Natural killer cell (primary cell): ENCODE measurements at regions of chr11 and their contacts with region 1.

Region 1: GRCh38 chr11:119121008-119121810 is at the start of gene HINFP:
- DNase-seq: peak; percentile 97 to 100
- ATAC-seq: peak; percentile 97 to 100 (median 97)
- H3K4me3 ChIP-seq: peak within 1 kb of the TSS; percentile 99
- H3K4me3 Mint-ChIP-seq: peak within 1 kb of the TSS; percentile 91
- H3K27ac ChIP-seq: peak within 1 kb of the TSS; percentile 73
- H3K27ac Mint-ChIP-seq: peak within 1 kb of the TSS; percentile 87 to 90
- H3K4me1 ChIP-seq: peaks cover 20% of the 10 kb centered on the region
- H3K4me1 Mint-ChIP-seq: peaks cover 32% of the 10 kb centered on the region in 2 donors
- H3K27me3 ChIP-seq: no peaks in the 10 kb centered on the region
- H3K27me3 Mint-ChIP-seq: no peaks in the 10 kb centered on the region
- CTCF ChIP-seq: no peak
- total RNA-seq, gene HINFP: 30.2 to 38.2 (median 31.5) TPM

Region 2: GRCh38 chr11:119067371-119068222 is 53.6 kb before region 1 on chr11 and contains the start of gene VPS11:
- intact Hi-C with region 1: loop called (anchors 5 kb)
- DNase-seq: peak; percentile 95 to 99
- ATAC-seq: peak; percentile 92 to 99 (median 93)
- H3K4me3 ChIP-seq: peak within 1 kb of the TSS; percentile 91
- H3K4me3 Mint-ChIP-seq: peak within 1 kb of the TSS; percentile 95
- H3K27ac ChIP-seq: peak within 1 kb of the TSS; percentile 89
- H3K27ac Mint-ChIP-seq: peak within 1 kb of the TSS; percentile 98 to 99
- H3K4me1 ChIP-seq: peaks cover 19% of the 10 kb centered on the region
- H3K4me1 Mint-ChIP-seq: peaks cover 32 to 33% of the 10 kb centered on the region in 2 donors
- H3K27me3 ChIP-seq: no peaks in the 10 kb centered on the region
- H3K27me3 Mint-ChIP-seq: no peaks in the 10 kb centered on the region
- CTCF ChIP-seq: no peak
- total RNA-seq, gene VPS11: 91.4 to 101 (median 91.7) TPM

Region 3: DNA sequence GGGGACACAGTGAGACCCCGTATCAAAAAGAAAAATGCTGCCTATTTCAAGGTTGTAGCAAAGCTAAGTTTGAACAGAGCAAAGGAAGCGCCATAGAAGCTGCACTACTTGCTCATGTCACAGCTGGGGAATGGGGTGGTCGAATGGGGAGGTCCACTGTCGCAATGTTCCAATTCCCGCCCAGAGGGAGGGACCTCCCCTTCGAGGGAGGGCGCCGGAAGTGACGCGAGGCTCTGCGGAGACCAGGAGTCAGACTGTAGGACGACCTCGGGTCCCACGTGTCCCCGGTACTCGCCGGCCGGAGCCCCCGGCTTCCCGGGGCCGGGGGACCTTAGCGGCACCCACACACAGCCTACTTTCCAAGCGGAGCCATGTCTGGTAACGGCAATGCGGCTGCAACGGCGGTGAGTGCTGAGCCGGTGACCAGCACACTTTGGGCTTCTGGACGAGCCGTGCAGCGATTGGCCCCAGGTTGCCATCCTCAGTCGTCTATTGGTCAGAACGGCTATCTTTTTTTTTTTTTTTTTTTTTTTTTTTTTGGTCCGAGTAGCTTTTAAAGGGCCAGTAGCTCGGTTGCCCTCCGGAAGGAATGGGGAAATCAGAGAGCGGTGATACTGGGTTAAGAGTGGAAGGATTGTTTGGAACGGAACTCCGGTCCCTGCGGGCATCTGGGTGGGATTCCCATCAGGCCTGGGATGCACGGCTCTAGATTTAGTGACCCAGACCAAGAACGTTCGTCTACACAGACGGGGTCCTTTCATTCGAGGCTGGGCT is 36.4 kb before region 1 on chr11 and contains the start of gene HMBS:
- intact Hi-C with region 1: loop called (anchors 5 kb)
- DNase-seq: peak; percentile 93 to 97
- ATAC-seq: peak; percentile 93 to 97 (median 95)
- H3K4me3 ChIP-seq: peak within 1 kb of the TSS; percentile 83
- H3K4me3 Mint-ChIP-seq: peak within 1 kb of the TSS; percentile 92
- H3K27ac ChIP-seq: peak within 1 kb of the TSS; percentile 52
- H3K27ac Mint-ChIP-seq: peak within 1 kb of the TSS; percentile 92 to 94
- H3K4me1 ChIP-seq: peaks cover 24% of the 10 kb centered on the region
- H3K4me1 Mint-ChIP-seq: peaks cover 12 to 16% of the 10 kb centered on the region in 2 donors
- H3K27me3 ChIP-seq: no peaks in the 10 kb centered on the region
- H3K27me3 Mint-ChIP-seq: no peaks in the 10 kb centered on the region
- CTCF ChIP-seq: no peak
- total RNA-seq, gene HMBS: 6.1 to 10.1 (median 6.7) TPM

Region 4: GRCh38 chr11:119095066-119095880 is 25.9 kb before region 1 on chr11:
- intact Hi-C with region 1: loop called (anchors 1 kb)
- DNase-seq: peak; percentile 99
- ATAC-seq: peak; percentile 80 to 92 (median 86)
- H3K4me3 ChIP-seq: peak overlapping the region; percentile 70
- H3K4me3 Mint-ChIP-seq: peak overlapping the region; percentile 91
- H3K27ac ChIP-seq: peak overlapping the region; percentile 84
- H3K27ac Mint-ChIP-seq: peak overlapping the region; percentile 95 to 96
- H3K4me1 ChIP-seq: peaks cover 32% of the 10 kb centered on the region
- H3K4me1 Mint-ChIP-seq: peaks cover 34 to 43% of the 10 kb centered on the region in 2 donors
- H3K27me3 ChIP-seq: no peaks in the 10 kb centered on the region
- H3K27me3 Mint-ChIP-seq: no peaks in the 10 kb centered on the region
- CTCF ChIP-seq: peak; percentile 3

Region 5: DNA sequence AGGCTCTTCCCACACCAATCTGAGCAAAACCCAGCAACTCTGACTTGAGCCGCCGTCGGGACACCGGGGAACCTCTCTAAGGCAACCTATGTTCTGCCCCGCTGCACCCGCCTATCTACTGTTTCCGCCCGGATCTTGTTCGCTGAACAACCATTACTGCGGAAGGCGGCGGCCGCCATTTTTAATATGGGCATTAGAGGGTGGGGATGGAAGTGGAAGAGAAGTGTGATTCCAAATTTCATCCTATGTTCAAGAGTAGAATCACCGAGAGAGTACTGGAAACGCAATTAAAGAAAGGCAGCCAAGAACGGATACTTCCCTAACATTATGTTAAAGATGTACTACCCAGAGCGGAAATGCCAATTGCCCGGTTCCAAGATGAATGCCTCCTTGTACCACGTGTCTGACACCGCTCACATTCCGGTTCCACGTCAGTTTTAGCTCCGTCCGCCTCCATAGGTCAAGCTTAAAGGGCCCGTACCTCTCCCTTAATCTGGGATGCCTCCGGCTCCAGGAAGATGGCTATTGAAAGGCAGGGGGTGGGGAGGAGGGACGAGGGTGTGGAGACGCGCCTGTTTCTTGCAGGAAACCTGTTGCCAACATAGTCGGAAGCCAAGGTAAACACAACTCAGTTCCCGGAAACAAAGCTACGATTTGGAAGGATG is 19.3 kb before region 1 on chr11 and contains the start of gene DPAGT1:
- intact Hi-C with region 1: loop called (anchors 1 kb)
- DNase-seq: peak; percentile 78 to 92
- ATAC-seq: peak; percentile 88 to 94 (median 90)
- H3K4me3 ChIP-seq: peak within 1 kb of the TSS; percentile 69
- H3K4me3 Mint-ChIP-seq: peak within 1 kb of the TSS; percentile 96
- H3K27ac ChIP-seq: peak within 1 kb of the TSS; percentile 77
- H3K27ac Mint-ChIP-seq: peak within 1 kb of the TSS; percentile 94 to 98
- H3K4me1 ChIP-seq: peaks cover 34% of the 10 kb centered on the region
- H3K4me1 Mint-ChIP-seq: peaks cover 29 to 38% of the 10 kb centered on the region in 2 donors
- H3K27me3 ChIP-seq: no peaks in the 10 kb centered on the region
- H3K27me3 Mint-ChIP-seq: no peaks in the 10 kb centered on the region
- CTCF ChIP-seq: no peak
- total RNA-seq, gene DPAGT1: 20.5 to 28.5 (median 24.4) TPM